Activated T-helper 1 cell treated with anti-CD3 and anti-CD28 coated beads, Interleukin-12 subunit alpha, Interleukin-12 subunit beta, Interleukin-2, Interleukin-4 antibody, amounts not matched to agents 30 ng/mL and 10 ng/mL and 1 ng/mL, durations not matched to agents 14 hours and 24 hours and 36 hours (primary cell): ENCODE measurements at regions of chr20 and their contacts with region 1.

Region 1: DNA sequence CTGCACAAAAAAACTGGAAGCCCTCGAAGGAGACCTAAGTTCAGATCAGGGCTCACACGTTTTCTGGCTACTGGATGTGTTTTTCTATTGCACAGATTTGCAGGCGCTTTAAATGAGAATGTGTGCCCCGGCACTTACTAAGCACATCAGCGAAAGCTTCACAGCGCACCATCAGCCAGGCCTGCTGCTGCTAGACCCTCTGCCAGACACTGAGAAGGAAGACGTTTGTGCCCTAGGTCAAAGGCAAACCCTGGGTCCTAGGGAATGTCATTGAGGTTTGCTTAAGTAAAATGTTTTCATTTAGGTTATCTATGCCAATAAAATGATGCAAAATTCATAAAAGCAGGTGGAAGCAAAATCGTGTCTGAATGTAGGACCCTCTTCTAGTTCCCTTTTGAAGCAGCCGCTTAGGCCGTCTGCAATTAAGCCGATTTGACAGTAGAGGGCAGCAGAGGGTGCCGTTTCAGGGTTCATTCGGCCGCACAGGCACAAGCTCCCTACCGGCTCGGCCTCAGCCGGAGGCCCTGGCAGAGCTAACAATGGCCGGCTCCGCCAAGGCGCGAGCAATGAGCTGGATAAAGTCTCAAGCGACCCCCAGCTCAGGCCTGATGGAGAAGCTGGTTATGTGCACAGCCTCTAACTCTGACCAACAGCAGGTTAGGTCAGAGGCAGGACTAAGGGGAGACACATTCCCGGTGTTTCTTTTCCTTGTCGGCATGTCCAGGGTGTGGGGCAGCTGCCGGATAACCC is 107.2 kb upstream of the FOXA2 start:
- DNase-seq: peak; percentile 33
- H3K4me3 Mint-ChIP-seq: no peak overlapping the region
- H3K27ac Mint-ChIP-seq: no peak overlapping the region
- H3K4me1 Mint-ChIP-seq: no peaks in the 10 kb centered on the region
- H3K27me3 Mint-ChIP-seq: peaks cover 2% of the 10 kb centered on the region

Region 2: DNA sequence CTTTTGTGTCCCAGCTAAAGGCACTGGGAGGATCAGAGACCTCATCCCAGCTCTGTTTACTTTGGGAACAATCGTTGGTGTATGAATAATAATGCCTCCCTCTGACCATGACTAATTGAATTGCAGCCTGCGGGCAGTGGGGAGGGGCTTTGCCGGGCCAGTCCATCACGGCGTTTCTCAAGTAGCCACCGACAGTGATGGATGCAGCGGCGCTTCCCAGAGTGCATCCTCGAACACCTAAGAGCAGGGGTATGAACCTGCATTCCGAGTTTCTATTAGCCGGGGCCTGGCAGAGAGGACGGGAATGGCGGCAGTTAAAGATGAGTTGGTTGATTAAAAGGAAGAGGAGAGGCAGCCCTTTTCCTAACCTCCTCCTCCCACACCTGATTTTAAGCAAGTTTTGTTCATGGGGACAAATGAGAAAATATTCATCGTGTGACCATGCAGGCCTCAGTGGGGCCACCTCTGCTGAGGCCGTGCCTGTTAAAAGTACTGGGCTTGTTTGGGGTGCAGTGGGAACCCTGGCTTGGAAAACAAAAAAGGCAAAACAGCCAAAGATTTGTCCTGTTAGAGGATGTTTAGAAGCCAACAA is 261.3 kb before region 1 on chr20:
- intact Hi-C with region 1: no loop called
- DNase-seq: no peak
- H3K4me3 Mint-ChIP-seq: no peak overlapping the region
- H3K27ac Mint-ChIP-seq: no peak overlapping the region
- H3K4me1 Mint-ChIP-seq: no peaks in the 10 kb centered on the region
- H3K27me3 Mint-ChIP-seq: no peaks in the 10 kb centered on the region

Region 3: GRCh38 chr20:22815603-22816315 is 124.2 kb after region 1 on chr20:
- intact Hi-C with region 1: no loop called
- DNase-seq: no peak
- H3K4me3 Mint-ChIP-seq: no peak overlapping the region
- H3K27ac Mint-ChIP-seq: no peak overlapping the region
- H3K4me1 Mint-ChIP-seq: no peaks in the 10 kb centered on the region
- H3K27me3 Mint-ChIP-seq: peaks cover 4% of the 10 kb centered on the region

Region 4: DNA sequence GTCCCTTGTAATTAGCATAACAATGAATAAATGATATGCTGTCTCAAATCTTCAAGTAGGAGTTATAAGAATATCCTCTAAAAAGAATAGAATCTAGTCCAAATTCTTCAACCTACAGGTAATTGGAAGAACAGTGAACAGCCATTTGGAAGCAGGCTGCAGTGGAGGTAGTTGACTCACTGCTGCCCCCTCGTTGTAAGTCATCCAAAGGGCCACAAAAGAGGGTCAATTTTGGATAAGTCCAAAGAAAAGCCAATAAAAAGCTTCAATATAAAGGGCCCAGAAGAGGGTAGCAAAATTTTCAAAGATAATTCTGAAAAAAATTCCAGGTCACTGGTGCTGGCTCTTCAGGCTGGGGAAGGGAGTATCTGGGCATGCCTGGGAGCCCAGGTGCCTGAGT is 282.8 kb after region 1 on chr20:
- intact Hi-C with region 1: loop called (anchors 5 kb)
- DNase-seq: no peak
- H3K4me3 Mint-ChIP-seq: no peak overlapping the region
- H3K27ac Mint-ChIP-seq: no peak overlapping the region
- H3K4me1 Mint-ChIP-seq: no peaks in the 10 kb centered on the region
- H3K27me3 Mint-ChIP-seq: peaks cover 11% of the 10 kb centered on the region

Region 5: DNA sequence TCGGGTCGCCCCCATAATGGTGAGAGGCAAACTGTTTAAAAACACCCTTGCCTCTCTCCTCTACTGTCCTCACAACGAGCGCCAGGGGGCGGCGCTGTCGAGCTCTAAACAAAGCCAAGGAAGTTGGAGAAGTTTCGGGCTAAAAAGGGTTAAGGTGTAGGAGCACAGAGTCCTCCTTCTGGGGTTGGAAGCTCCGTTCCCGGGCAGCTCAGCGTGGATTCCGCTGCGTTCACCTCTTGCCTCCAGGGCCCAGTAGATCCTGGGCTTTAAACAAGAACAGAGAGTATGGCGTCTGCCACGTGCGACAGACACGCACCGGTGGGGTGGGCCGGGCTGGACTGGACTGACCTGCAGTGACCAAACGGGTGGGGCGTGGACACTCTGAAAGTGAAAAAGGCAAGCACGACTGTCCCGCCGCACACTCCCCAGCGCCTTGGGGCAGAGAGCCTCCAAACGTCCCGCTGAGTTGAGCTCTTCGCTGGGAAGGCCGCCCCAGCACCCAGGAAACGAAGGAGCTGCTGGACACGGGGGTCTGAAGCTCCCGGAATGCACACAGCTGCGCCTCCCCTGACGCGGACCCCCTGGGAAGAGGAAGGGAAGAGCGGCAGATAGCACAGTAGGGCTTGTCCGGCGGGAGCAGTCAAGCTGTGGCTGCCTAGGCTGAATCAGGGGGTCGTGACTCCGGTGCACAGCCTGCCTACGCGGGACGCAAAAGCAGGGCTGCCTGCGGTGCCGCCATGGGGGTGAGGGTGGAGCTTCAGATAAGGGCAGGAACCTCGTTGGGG is 359.5 kb after region 1 on chr20:
- intact Hi-C with region 1: loop called (anchors 2 kb)
- DNase-seq: no peak
- H3K4me3 Mint-ChIP-seq: no peak overlapping the region
- H3K27ac Mint-ChIP-seq: no peak overlapping the region
- H3K4me1 Mint-ChIP-seq: no peaks in the 10 kb centered on the region
- H3K27me3 Mint-ChIP-seq: peaks cover 64% of the 10 kb centered on the region

Region 6: DNA sequence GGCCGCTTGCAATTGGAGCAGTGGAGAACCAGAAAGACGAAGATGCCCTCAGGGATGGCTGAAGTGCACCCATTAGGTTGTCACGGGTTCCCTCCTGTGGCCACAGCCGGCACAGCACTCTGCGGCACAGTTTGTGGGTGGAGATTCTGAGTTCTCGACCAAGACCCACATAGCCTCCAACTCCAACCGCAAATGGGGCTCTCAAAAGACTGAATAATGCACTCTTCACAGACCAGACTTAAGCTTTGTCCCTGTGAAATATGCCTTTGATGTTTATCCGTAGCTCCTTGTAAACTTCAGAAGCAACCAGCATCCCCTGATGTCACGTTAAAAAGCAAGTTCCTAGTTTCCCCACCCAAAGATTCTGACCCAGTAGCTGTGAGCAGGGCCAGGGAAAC is 915.1 kb after region 1 on chr20:
- intact Hi-C with region 1: loop called (anchors 2 kb)
- DNase-seq: peak; percentile 44
- H3K4me3 Mint-ChIP-seq: no peak overlapping the region
- H3K27ac Mint-ChIP-seq: no peak overlapping the region
- H3K4me1 Mint-ChIP-seq: no peaks in the 10 kb centered on the region
- H3K27me3 Mint-ChIP-seq: peaks cover 2% of the 10 kb centered on the region